ENCODE measurements at regions of chr7 and their contacts with region 1.

Region 1: DNA sequence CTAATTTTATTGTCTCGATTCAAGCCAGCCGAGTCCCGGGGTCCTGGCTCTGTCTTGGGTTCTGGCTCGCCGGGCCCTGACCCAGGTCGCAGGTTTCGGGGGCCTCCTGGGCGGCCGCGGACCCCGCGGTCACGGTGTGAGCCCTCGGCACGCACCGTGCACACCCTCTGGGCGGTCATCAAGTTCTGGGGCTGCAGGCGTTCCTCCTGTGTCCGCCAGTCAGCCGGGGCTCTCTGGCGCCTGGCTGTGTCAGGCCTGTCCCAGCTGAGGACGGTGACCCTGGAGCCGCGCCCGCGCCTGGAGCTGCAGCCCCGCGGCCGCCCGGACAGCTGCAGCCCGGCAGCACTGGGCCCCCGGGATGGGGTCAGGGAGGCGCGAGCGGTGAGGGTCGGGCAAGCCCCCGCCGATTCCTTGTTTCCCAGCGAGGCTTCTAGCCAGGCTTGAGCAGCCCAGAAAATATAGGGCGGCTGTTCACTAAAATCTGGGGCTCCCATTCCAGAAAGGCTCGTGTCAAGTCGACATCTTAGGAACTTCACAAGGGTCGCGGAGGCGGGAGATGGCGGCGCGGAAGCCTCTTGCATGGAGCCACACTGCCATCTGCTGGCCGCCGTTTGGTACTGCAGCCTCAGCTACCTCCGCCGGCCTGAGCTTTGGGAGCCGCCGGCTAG is 4.2 kb upstream of the HOXA7 start:
- DNase-seq: peak; percentile 74 to 90 (median 79)
- H3K4me3 ChIP-seq: peak overlapping the region; percentile 29 to 76 (median 62)
- H3K27ac ChIP-seq: peak overlapping the region in 1 of 59 donors; percentile 36
- H3K27me3 ChIP-seq: peaks cover 20 to 100% (median 94%) of the 10 kb centered on the region in 45 donors
- CTCF ChIP-seq: peak; percentile 96 to 100 (median 100)

Region 2: DNA sequence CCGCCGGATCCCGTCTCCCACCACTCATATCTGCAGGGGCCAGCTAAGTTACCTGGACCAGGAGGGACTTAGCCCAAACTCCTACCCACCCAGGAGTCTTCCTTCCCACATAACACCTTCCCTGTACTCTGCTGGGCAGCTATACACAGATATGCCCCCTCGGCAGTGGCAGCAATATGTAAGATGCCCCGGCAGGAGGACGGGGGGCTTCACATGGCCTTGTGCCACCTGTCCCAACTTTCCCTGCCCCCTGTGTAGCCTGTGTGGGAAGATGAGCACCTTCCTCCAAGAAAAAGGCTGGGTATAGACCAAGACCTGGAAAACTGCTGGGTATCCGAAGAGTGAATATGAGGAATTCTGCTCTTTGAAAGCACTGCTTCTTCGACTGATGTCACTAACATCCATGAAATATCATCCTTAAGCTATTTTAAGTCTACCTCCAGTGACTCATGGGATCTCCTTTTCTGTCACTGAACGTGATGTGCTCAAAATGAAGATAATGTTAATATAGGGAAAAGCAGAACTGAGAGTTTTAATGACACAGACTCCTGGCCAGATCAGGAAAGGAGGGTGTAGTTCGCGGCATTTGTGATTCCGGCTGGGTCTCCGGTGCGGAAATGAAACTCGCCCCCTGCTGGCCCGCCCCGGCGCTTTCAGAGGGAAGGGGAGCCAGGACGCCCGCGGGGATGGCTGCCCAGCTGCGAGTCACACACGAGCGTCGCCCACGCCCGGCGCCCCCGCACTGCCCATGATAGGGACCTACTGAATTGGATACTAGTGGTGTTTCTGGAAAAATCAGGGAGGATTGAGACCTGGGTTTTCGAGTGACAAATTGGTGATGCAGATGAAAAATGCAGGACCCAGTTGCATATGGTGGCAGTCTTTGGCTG is 1265.5 kb before region 1 on chr7:
- intact Hi-C with region 1: loop called (anchors 5 kb)
- DNase-seq: peak in 9 of 10 donors; percentile 49 to 81 (median 60)
- H3K4me3 ChIP-seq: peak overlapping the region in 56 of 59 donors; percentile 0 to 62 (median 41)
- H3K27ac ChIP-seq: peak overlapping the region in 1 of 59 donors; percentile 5
- H3K27me3 ChIP-seq: peaks cover 0 to 24% (median 0%) of the 10 kb centered on the region in 45 donors
- CTCF ChIP-seq: peak; percentile 32 to 80 (median 68)

Region 3: DNA sequence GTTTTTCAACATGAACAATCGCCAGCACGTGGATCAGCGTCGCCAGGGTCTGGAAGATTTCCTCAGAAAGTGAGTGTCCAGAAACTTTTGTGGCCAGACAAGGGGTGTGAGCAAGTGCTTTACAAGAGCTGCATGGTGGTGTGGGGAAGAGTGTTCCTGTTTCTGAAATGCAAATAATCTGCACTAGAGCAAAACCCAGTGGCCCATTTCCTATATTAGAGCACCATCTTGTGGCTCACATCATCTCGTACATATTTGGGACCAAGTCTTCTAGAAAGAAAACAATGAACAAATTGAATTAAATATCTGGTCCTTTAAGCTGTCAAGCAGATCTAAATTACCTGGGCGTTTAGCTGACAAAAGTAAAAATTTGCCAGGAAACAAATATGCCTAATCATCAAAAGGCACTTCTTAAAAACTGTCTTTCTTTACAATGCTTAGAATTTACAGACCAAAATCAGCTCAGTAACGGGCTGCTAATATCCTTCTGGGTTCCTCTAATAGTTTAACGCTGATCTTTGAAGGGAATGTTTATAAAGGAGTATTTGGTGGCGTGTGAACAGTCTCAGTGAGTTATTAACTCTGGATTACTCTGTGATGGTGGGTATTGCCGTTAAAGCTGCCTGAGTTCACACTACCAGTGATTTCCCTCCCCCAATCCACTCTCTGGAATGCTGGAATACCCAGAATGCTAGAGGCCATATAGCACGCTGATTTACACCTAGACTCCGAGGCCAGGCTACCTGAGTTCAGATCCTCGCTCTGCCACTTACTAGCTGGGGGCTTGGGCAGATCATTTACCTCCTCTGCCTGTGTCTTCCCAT is 795.4 kb before region 1 on chr7:
- intact Hi-C with region 1: loop called (anchors 2 to 5 kb)
- DNase-seq: peak in 4 of 10 donors; percentile 19 to 64 (median 56)
- H3K4me3 ChIP-seq: peak overlapping the region in 4 of 59 donors; percentile 5 to 24 (median 14)
- H3K27ac ChIP-seq: peak overlapping the region in 3 of 59 donors; percentile 4 to 10 (median 5)
- H3K27me3 ChIP-seq: peaks cover 0 to 27% (median 0%) of the 10 kb centered on the region in 45 donors
- CTCF ChIP-seq: peak; percentile 65 to 95 (median 85)

Region 4: DNA sequence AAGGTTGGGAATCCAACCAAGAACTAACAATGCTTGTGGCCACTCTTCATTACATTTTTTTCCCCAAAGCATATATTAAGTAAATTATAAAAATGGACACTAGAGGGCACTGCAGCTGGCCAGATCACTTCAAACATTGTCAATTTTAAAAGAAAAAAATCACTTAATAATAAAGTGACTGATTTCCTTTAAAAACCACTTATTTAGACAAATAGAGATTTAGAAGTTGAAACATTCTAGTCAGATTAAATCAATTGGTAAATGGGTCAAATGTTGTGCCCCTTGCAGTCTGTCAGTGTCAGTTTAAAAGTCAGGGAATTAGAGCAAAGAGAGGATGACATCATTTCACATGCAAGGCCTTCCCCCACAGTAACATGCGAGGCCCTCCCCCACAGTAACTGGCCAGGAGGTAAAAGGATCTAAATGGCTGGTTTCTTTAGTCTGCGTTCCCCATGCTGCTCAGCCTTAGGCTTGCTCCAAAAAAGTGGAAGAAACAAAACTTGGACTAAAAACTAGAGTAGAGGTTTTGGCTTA is 474.2 kb before region 1 on chr7:
- intact Hi-C with region 1: loop called (anchors 2 to 5 kb)
- DNase-seq: no peak
- H3K4me3 ChIP-seq: no peak overlapping the region
- H3K27ac ChIP-seq: no peak overlapping the region
- H3K27me3 ChIP-seq: peaks cover 0 to 23% (median 0%) of the 10 kb centered on the region in 45 donors
- CTCF ChIP-seq: peak; percentile 57 to 84 (median 76)

Region 5: DNA sequence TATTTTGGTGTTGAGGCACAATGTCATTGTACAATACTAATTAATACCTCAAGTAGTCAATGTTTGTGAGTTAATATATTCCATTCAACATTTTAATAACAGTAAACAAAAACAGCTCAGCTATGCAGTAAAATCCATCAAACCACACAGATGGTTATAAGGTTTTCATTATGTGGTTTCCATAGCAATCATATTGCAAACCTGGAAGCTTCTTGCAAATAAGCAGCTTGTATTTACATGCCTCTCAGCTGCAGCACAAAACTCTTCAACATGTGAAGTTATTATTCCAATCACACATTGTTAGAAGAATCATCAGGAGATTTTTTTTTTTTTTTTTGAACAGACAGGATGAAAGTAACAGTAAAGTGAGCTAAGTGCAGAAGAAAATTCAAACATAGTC is 466.5 kb before region 1 on chr7:
- intact Hi-C with region 1: loop called in 1 of 2 experiments (anchors 5 kb)
- DNase-seq: no peak
- H3K4me3 ChIP-seq: no peak overlapping the region
- H3K27ac ChIP-seq: no peak overlapping the region
- H3K27me3 ChIP-seq: peaks cover 0 to 3% (median 0%) of the 10 kb centered on the region in 45 donors
- CTCF ChIP-seq: no peak

Region 6: GRCh38 chr7:26853788-26854393 is 306.8 kb before region 1 on chr7:
- intact Hi-C with region 1: loop called (anchors 5 to 10 kb)
- DNase-seq: no peak
- H3K4me3 ChIP-seq: no peak overlapping the region
- H3K27ac ChIP-seq: no peak overlapping the region
- H3K27me3 ChIP-seq: peaks cover 0 to 69% (median 27%) of the 10 kb centered on the region in 45 donors
- CTCF ChIP-seq: peak in 55 of 56 donors; percentile 20 to 72 (median 47)

Region 7: GRCh38 chr7:27697861-27698430 is 537.3 kb after region 1 on chr7:
- intact Hi-C with region 1: no loop called
- DNase-seq: peak in 1 of 10 donors; percentile 12
- H3K4me3 ChIP-seq: no peak overlapping the region
- H3K27ac ChIP-seq: no peak overlapping the region
- H3K27me3 ChIP-seq: no peaks in the 10 kb centered on the region
- CTCF ChIP-seq: no peak

Measured in dorsolateral prefrontal cortex (tissue), 120 donors.